ENCODE measurements at regions of chr10 and their contacts with region 1.

Region 1: DNA sequence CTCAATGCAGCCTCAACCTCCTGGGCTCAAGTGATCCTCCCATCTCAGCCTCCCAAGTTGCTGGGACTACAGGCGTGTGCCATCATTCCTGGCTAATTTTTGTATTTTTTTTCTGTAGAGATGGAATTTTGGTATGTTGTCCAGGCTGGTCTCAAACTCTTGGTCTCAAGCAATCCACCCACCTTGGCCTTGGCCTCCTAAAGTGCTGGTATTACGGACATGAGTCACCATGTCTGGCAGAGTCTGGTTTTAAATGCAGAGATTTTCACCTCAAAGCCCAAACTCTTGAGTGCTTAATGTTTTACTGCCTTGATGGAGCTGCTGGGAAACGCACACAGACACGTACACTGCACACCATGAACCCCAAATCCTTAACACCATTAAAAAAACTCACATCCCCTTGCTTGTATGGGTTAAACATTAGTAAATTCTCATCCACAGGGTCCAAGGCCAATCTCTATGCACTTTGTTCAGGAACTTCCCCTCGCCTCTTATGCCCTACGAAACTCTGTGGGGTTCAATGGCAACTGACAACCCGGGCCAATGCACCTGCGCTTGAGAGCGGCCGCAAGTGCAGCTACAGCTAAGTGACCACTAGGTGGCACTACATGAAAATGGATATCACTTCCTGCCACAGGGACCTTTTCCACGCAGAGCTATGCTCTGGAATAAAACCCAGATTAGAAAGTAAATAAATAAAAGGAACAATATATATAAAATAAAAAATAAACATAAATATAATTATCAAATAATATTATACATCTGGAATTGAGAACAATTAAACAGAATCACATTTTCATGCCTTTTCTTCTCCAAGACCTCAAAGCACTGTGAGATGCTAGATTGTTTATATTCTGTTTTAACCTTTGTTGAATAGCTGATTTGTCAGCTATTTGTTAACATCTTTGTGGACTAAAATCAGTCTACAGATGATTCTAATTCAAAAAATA is 66.9 kb upstream of the AFAP1L2 start:
- DNase-seq: peak; percentile 82
- ATAC-seq: peak; percentile 67

Region 2: DNA sequence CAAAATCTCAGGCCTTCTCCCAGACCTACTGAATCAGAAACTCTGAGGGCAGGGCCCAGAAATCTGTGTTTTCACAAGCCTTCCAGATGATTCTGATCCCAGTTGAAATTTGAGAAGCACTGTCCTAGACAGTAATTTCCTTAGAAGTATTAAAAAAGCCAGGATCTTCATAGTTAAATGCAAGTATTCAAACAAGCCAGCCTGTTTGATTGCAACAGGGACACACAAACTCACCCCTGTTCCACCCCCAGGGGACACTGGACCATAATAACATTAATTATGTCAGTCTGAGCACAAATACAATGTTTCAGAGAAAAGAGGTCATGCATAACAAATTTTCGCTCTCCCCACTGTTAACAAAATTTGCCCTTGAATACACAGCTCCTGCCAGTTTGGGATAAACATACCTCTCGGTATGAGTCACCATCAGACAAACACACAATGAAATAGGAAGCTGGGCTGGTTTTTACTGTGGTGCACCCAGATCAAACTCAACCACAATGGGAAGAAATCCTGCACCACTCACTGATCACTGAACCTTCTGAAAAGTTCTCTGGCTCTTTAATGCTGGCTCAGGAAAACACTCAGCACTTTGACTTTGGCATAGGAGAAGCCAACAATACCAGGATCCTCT is 152.5 kb after region 1 on chr10:
- intact Hi-C with region 1: loop called (anchors 10 kb)
- DNase-seq: no peak
- ATAC-seq: no peak

Region 3: GRCh38 chr10:114779803-114780609 is 308.8 kb after region 1 on chr10:
- intact Hi-C with region 1: loop called (anchors 5 kb)
- DNase-seq: no peak
- ATAC-seq: no peak

Region 4: GRCh38 chr10:114821293-114821914 is 350.2 kb after region 1 on chr10 and contains the start of gene FHIP2A:
- intact Hi-C with region 1: loop called (anchors 5 kb)
- DNase-seq: peak; percentile 93
- ATAC-seq: peak; percentile 94
- total RNA-seq, gene FHIP2A: 25.2 TPM